ENCODE measurements at regions of chr17 and their contacts with region 1.

Region 1: GRCh38 chr17:36948717-36949460 is at the start of gene AATF:
- DNase-seq: peak; percentile 100
- H3K4me3 Mint-ChIP-seq: peak within 1 kb of the TSS; percentile 95
- H3K27ac Mint-ChIP-seq: peak within 1 kb of the TSS; percentile 98
- H3K4me1 Mint-ChIP-seq: peaks cover 46% of the 10 kb centered on the region
- H3K27me3 Mint-ChIP-seq: peaks cover 36% of the 10 kb centered on the region
- total RNA-seq, gene AATF: 116 and 118 TPM in 2 replicates

Region 2: GRCh38 chr17:36722121-36722902 is 226.6 kb before region 1 on chr17:
- intact Hi-C with region 1: loop called (anchors 2 kb)
- DNase-seq: peak; percentile 96
- H3K4me3 Mint-ChIP-seq: peak overlapping the region; percentile 80
- H3K27ac Mint-ChIP-seq: peak overlapping the region; percentile 99
- H3K4me1 Mint-ChIP-seq: peaks cover 50% of the 10 kb centered on the region
- H3K27me3 Mint-ChIP-seq: no peaks in the 10 kb centered on the region

Region 3: DNA sequence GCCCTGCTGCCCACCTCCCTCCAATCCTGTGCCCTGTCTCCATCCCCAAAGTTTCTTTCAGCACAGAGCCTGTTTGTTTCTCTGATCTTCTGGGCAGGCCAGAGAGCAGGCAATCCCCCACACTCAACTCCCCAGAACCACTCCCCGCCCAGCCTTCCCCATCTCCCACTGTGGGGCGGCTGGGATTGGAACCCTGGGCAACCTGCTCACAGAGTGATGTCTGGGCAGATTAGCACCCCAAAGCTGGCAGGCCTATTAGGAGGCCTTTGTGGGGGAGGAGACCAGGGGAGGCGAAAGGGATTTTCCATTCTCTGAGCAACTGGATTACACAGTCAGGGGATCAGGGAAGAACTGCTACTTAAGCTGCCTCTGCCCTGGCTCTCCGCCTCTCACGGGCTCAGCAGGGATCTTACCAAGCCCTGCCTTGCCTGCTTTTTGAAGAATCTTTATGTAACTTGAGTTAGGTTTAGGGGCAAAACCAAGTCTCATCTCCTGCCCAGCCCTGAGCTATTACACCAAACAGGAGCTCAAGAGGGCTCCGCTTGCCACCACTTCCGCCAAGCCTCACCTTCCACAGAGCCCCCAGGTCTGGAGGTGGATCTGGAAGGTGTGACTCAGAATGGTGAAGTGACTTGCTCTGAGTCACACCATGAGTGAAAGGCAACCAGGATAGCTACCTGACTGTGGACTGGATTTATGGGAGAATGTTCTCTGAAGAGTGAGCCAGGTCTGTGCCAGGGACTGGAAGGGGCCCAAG is 27.6 kb before region 1 on chr17:
- intact Hi-C with region 1: loop called (anchors 2 kb)
- DNase-seq: peak; percentile 71
- H3K4me3 Mint-ChIP-seq: peak overlapping the region; percentile 64
- H3K27ac Mint-ChIP-seq: peak overlapping the region; percentile 89
- H3K4me1 Mint-ChIP-seq: peaks cover 22% of the 10 kb centered on the region
- H3K27me3 Mint-ChIP-seq: peaks cover 22% of the 10 kb centered on the region

Region 4: DNA sequence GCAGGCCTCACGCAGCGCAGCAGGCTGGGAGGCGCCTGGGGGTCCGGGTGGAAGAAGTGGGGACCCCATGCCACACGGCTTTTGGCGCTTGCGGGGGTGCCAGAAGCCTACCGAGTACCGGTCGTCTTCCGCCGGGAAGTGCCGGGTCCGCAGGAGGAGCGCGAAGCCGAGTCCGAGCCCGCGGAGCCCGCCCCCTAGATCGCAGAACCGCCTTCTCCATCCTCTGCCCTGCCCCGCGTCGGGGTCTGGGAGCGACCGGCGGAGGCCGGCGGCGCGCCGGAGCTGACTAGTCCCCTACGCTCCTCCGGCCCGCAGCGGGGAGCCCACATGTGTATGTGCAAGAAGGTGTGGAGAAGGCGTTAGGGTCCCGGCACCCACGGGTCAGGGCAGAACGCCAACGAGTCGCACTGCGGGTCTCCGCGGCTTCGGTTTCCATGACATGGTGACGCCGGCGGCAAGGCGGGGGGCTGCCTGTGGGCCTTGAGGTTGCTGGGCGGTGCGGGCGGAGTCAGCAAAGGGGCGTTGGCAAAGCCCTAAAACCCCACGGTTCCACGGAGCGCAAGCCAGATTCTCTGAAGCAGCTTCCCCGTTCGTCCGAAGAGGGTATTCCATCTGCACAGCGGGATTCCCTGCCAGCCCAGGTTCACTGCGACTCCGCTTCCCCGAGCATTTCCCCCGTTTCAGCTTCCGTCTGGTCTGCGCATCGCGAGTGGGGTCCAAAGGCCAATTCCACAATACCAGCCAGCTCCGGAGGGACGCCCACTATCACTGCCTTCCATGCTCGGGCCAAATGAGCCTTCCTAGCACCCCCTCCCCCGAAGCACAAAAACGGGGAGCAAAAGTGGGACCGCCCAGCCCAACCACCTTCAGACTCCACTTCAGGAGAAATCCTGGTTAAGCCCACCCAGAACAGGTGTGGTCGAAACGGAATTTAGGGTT is 13.9 kb before region 1 on chr17:
- intact Hi-C with region 1: loop called (anchors 1 kb)
- DNase-seq: peak; percentile 74
- H3K4me3 Mint-ChIP-seq: peak overlapping the region; percentile 64
- H3K27ac Mint-ChIP-seq: peak overlapping the region; percentile 70
- H3K4me1 Mint-ChIP-seq: peaks cover 44% of the 10 kb centered on the region
- H3K27me3 Mint-ChIP-seq: peaks cover 85% of the 10 kb centered on the region

Region 5: DNA sequence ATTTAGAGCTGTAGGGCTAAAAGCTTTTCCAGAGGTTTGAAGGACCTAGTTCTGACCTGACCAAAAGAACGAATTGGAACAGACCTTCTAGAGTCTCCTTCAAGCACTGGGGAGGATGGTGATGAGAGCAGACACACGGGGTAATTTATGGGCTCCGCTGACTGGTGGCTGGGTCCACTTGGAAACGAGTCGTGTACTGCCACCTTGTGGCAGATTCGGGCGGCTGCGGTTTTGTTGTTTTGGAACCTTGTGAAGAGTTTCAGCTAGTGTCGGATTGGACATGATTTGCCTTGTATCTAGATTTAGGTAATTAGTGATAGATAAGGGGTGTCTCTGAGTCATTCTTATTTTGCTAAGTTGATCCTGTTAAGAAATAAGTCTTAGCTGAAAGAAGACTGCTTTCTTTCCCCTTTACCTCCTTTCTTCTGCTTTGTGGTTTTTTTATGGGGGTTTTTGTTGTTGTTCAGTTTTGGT is 98.8 kb after region 1 on chr17:
- intact Hi-C with region 1: loop called (anchors 2 kb)
- DNase-seq: peak; percentile 92
- H3K4me3 Mint-ChIP-seq: no peak overlapping the region
- H3K27ac Mint-ChIP-seq: peak overlapping the region; percentile 0
- H3K4me1 Mint-ChIP-seq: peaks cover 9% of the 10 kb centered on the region
- H3K27me3 Mint-ChIP-seq: no peaks in the 10 kb centered on the region

Region 6: GRCh38 chr17:37358830-37359681 is 410.2 kb after region 1 on chr17:
- intact Hi-C with region 1: loop called (anchors 5 kb)
- DNase-seq: peak; percentile 97
- H3K4me3 Mint-ChIP-seq: peak overlapping the region; percentile 97
- H3K27ac Mint-ChIP-seq: peak overlapping the region; percentile 93
- H3K4me1 Mint-ChIP-seq: peaks cover 25% of the 10 kb centered on the region
- H3K27me3 Mint-ChIP-seq: no peaks in the 10 kb centered on the region

Measured in activated CD4-positive, alpha-beta T cell treated with anti-CD3 and anti-CD28 coated beads, Interleukin-2, amount 10 ng/mL, durations not matched to agents 24 days and 14 days (primary cell).